Activated CD4-positive, alpha-beta memory T cell treated with anti-CD3 and anti-CD28 coated beads for 36 hours (primary cell): ENCODE measurements at regions of chr3 and their contacts with region 1.

Region 1: GRCh38 chr3:108292905-108293328 is 3.4 kb upstream of the HHLA2 start:
- DNase-seq: peak; percentile 23
- H3K4me3 Mint-ChIP-seq: peak overlapping the region; percentile 31
- H3K27ac Mint-ChIP-seq: peak overlapping the region; percentile 38
- H3K4me1 Mint-ChIP-seq: peaks cover 48% of the 10 kb centered on the region
- H3K27me3 Mint-ChIP-seq: no peaks in the 10 kb centered on the region

Region 2: GRCh38 chr3:107938143-107938542 is 354.8 kb before region 1 on chr3:
- CTCF ChIA-PET with region 1: no interaction called
- POLR2A ChIA-PET with region 1: no interaction called
- intact Hi-C with region 1: loop called (anchors 1 kb)
- DNase-seq: peak; percentile 20
- H3K4me3 Mint-ChIP-seq: no peak overlapping the region
- H3K27ac Mint-ChIP-seq: no peak overlapping the region
- H3K4me1 Mint-ChIP-seq: peaks cover 18% of the 10 kb centered on the region
- H3K27me3 Mint-ChIP-seq: no peaks in the 10 kb centered on the region

Region 3: GRCh38 chr3:108130701-108131474 is 162.0 kb before region 1 on chr3:
- CTCF ChIA-PET with region 1: no interaction called
- POLR2A ChIA-PET with region 1: interaction called, 6 read pairs
- intact Hi-C with region 1: loop called (anchors 1 kb)
- DNase-seq: no peak
- H3K4me3 Mint-ChIP-seq: peak overlapping the region; percentile 33
- H3K27ac Mint-ChIP-seq: peak overlapping the region; percentile 85
- H3K4me1 Mint-ChIP-seq: peaks cover 88% of the 10 kb centered on the region
- H3K27me3 Mint-ChIP-seq: no peaks in the 10 kb centered on the region

Region 4: GRCh38 chr3:108221911-108222852 is 70.7 kb before region 1 on chr3 and contains the start of gene IFT57:
- CTCF ChIA-PET with region 1: interaction called, 3 read pairs
- POLR2A ChIA-PET with region 1: interaction called, 14 read pairs
- intact Hi-C with region 1: loop called (anchors 1 kb)
- DNase-seq: peak; percentile 96
- H3K4me3 Mint-ChIP-seq: peak within 1 kb of the TSS; percentile 96
- H3K27ac Mint-ChIP-seq: peak within 1 kb of the TSS; percentile 96
- H3K4me1 Mint-ChIP-seq: peaks cover 47% of the 10 kb centered on the region
- H3K27me3 Mint-ChIP-seq: no peaks in the 10 kb centered on the region
- total RNA-seq, gene IFT57: 29.4 to 29.6 TPM

Region 5: DNA sequence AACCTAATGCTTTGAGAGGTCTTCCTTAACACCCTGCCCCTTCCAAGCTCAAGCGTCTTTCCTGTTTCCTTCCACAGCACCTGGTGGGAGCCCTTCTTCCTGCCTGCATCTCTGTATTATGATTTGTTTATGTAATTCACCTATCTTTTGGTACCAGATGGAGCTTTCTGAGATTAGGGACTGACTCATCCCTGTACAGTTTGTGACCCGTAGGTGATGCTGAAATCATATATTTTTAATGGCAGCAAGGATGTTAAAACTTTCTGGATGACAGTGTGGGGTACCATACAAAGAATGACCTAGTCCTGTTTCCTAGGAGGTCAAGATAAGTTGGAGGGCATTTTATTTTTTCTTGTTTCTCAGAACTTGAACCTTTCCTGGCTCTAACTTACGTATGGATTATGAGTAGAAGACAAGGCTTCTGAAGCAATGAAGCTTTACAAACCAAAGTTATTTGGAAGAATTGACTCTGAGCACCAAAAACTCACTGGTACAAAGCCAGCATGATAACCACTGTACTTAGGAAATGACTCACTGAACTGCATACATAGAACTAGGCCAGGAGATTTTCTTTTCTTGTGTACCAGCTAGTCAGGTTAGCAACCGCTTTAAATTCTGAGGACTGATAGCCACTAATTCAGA is 50.0 kb after region 1 on chr3:
- CTCF ChIA-PET with region 1: interaction called, 3 read pairs
- POLR2A ChIA-PET with region 1: interaction called, 3 read pairs
- intact Hi-C with region 1: loop called (anchors 1 kb)
- DNase-seq: peak; percentile 17
- H3K4me3 Mint-ChIP-seq: no peak overlapping the region
- H3K27ac Mint-ChIP-seq: peak overlapping the region; percentile 58
- H3K4me1 Mint-ChIP-seq: peaks cover 13% of the 10 kb centered on the region
- H3K27me3 Mint-ChIP-seq: peaks cover 3% of the 10 kb centered on the region

Region 6: DNA sequence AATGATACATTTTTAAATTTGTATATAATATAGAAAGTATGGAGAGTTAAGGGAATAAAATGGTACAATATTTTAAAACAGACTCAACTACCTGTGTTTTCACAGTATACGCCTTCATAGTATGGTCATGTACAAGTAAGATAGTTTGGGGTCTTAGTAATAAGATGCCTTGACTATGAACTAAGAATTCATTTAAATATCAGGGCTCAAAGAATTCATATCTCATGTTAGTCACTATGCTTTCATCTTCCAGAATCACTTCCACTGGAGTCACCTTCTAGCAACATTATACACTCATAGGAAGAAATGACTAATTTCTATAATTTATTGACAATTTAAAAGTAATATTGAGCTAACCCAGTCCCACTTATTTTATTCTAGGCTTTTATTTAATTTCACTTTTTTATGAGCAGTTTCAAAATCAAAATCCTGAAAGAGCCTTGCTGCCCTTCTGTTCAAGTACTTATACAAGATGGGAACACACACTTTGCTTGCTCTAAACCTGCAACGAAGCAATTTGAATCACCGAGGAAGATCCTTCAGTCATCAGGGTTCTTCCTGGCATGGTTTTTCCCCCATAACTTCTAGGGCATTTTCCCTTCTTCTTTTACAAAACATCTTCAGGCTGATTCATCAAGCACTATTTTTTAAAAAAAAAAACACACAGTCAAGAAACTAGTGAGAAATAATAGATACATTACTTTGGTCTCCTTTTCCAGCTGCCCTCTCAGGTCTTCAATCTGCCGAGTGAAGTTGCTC is 123.4 kb after region 1 on chr3:
- CTCF ChIA-PET with region 1: no interaction called
- POLR2A ChIA-PET with region 1: no interaction called
- intact Hi-C with region 1: loop called (anchors 1 kb)
- DNase-seq: no peak
- H3K4me3 Mint-ChIP-seq: no peak overlapping the region
- H3K27ac Mint-ChIP-seq: no peak overlapping the region
- H3K4me1 Mint-ChIP-seq: peaks cover 12% of the 10 kb centered on the region
- H3K27me3 Mint-ChIP-seq: peaks cover 5% of the 10 kb centered on the region